Mammary epithelial cell (primary cell): ENCODE measurements at regions of chr1 and their contacts with region 1.

Region 1: DNA sequence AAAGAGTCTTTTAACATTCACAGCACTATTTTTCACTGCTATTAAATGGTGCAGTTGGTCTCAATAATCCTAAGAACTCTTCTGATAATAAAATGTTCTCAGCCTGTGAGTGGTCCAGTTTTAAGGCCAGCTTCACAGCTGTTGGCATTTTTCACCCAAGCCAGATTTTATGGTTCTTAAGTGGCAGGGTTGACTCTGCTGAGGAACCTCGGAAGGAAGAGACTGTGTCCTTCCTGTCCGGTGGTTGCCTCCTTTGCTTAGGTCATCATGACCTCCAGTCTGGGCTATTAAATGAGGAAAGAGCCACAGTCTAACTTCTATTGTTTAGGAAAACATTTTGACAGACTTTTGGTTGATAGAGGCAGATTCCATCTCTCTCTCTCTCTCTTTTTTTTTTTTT is 112.5 kb upstream of the SERBP1 start:
- DNase-seq: no peak
- H3K4me3 ChIP-seq: no peak overlapping the region
- H3K27ac ChIP-seq: no peak overlapping the region
- H3K4me1 ChIP-seq: no peaks in the 10 kb centered on the region
- H3K27me3 ChIP-seq: no peaks in the 10 kb centered on the region
- CTCF ChIP-seq: no peak

Region 2: GRCh38 chr1:67194209-67194863 is 348.4 kb before region 1 on chr1:
- CTCF ChIA-PET with region 1: no interaction called
- dilution Hi-C with region 1: no loop called
- in situ Hi-C with region 1: no loop called
- intact Hi-C with region 1: no loop called
- DNase-seq: no peak
- H3K4me3 ChIP-seq: no peak overlapping the region
- H3K27ac ChIP-seq: no peak overlapping the region
- H3K4me1 ChIP-seq: no peaks in the 10 kb centered on the region
- H3K27me3 ChIP-seq: no peaks in the 10 kb centered on the region
- CTCF ChIP-seq: no peak

Region 3: DNA sequence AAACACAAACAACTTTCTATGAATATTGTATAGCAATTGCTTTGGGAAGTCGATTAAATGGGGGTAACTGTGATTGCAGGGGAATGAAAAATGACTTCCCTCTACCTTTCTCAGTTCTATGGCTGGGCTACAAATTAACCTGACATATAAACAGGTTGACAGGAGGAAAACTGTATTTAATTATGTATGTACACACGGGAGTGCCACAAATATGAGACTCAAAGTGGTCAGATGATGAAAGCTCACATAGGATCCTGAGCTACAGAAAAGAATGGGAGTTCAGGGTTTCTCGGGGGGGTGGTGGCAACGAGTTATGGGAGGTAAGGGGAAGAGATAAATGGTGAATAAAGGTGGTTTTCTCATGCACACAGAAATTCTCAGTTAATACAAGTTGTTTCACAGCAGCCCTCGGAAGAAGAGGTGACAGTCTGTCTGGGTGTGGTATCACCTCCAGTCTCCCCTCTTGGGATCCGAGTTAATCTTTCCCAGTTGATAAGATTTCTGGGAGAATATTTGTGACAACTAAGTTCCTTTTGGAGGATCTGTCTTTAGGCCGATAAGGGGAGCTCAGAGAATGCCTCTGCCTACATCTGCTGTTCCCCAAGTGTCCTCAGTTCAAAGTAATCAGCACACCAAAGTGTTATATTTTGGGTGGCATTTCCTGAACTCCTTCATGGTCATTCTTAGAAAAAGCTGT is 168.6 kb after region 1 on chr1:
- CTCF ChIA-PET with region 1: interaction called, 16 read pairs
- dilution Hi-C with region 1: no loop called
- in situ Hi-C with region 1: no loop called
- intact Hi-C with region 1: no loop called
- DNase-seq: no peak
- H3K4me3 ChIP-seq: no peak overlapping the region
- H3K27ac ChIP-seq: no peak overlapping the region
- H3K4me1 ChIP-seq: peaks cover 37% of the 10 kb centered on the region
- H3K27me3 ChIP-seq: no peaks in the 10 kb centered on the region
- CTCF ChIP-seq: no peak